Left ventricle myocardium inferior (tissue), 1 donor: ENCODE measurements at regions of chr1 and their contacts with region 1.

Region 1: DNA sequence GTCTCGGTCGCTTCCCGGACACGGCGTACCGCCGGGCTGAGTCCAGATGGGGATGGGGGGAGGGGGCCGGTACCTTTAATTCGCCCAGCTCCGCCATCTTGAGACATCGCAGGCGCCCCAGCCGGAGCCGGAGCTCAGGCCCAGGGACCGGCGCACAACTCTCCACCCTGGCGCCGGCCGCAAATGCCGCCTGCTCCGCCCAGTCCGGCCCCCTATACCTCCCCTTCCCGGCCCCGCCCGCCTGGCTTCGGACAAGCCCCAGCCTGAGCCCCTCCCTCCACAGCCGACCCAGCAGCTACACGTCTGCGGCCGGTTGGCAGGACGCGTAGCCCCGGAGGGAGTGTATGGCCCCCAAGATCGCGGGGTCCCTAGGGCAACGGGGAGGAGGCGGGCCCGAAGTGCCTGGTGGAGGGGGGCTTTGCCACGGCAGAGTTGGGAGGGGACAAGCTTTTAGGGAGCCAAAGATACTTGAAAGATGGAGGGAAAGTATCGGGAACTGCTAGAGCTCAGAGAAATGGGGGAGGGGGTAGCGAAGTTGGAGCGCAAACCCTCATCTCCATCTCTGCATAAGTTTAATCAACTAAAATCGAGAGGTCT is at the start of gene PIAS3:
- DNase-seq: peak; percentile 97
- H3K4me3 ChIP-seq: peak within 1 kb of the TSS; percentile 89
- H3K27ac ChIP-seq: peak within 1 kb of the TSS; percentile 94
- H3K4me1 ChIP-seq: peaks cover 32% of the 10 kb centered on the region
- H3K27me3 ChIP-seq: no peaks in the 10 kb centered on the region
- CTCF ChIP-seq: no peak
- total RNA-seq, gene PIAS3: 14.6 TPM

Region 2: DNA sequence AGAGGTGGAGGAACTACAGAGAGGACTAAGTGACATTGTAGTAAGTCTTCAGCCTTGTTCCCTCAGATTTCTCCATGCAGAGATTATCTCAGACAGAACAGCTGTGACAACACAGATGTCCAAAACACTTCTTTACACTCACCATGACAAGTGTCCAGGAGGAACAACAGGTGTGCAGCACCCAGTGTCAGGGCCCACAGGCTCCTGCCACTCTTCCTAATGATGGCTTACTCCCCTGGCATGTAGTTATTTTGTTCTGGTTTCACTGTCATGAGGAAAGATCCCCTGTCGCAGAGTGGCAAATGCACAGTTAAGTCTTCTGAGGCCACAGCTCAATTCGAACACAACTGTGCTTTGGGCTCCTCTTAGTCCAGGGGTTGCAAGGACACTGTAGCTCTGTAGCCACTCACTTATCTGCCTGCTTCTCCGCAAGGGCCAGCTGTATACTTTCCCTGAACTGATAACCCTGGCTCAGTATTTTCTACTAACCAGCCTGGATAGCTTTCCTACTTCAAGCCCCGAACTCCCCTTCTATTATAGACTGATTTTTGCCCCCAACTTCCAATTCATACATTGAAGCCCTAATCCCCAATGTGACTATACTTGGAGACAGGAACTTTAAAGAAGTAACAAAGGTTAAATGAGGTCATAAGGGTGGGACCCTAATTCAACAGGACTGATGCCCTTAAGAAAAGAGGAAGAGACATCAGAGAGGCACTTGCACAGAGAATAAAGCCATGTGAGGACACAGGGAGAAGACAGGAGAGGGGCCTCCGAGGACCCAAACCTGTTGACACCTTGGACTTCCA is 163.0 kb before region 1 on chr1:
- intact Hi-C with region 1: no loop called
- DNase-seq: no peak
- H3K4me3 ChIP-seq: no peak overlapping the region
- H3K27ac ChIP-seq: no peak overlapping the region
- H3K4me1 ChIP-seq: peaks cover 5% of the 10 kb centered on the region
- H3K27me3 ChIP-seq: peaks cover 3% of the 10 kb centered on the region
- CTCF ChIP-seq: no peak

Region 3: DNA sequence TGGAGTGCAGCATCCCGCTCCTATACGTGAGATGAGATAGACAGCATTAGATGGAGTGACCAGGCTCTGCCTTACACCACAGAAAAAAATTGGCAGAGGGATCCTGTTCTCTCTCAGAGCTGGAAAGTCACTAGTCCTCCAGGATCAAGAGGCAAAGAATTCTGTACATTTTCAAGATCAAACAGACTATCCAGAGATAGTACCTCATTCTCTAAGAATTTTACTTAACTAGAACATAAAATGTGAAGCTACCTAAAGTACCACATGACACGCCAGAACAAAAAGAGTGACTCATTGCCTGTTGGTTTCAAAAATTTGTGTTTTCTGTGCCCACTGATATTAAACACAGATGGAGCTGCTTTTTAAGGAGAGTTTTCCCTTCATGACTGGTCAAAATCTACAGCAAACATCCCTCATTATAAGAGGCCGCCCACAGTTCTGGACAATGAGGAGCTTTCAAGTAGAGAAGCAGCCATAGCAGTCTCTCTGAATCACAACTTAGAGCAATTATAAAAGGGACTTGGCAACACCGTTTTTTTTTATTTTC is 107.4 kb before region 1 on chr1:
- intact Hi-C with region 1: no loop called
- DNase-seq: no peak
- H3K4me3 ChIP-seq: no peak overlapping the region
- H3K27ac ChIP-seq: no peak overlapping the region
- H3K4me1 ChIP-seq: peaks cover 16% of the 10 kb centered on the region
- H3K27me3 ChIP-seq: no peaks in the 10 kb centered on the region
- CTCF ChIP-seq: no peak

Region 4: GRCh38 chr1:145963995-145964901 is 105.3 kb after region 1 on chr1 and contains the starts of genes ANKRD34A and POLR3GL:
- intact Hi-C with region 1: loop called (anchors 10 kb)
- DNase-seq: peak; percentile 96
- H3K4me3 ChIP-seq: peak within 1 kb of the TSS; percentile 83
- H3K27ac ChIP-seq: peak within 1 kb of the TSS; percentile 95
- H3K4me1 ChIP-seq: peaks cover 71% of the 10 kb centered on the region
- H3K27me3 ChIP-seq: no peaks in the 10 kb centered on the region
- CTCF ChIP-seq: no peak
- total RNA-seq, gene ANKRD34A: 0.66 TPM
- total RNA-seq, gene POLR3GL: 45.6 TPM